Aorta (tissue), 5 donors: ENCODE measurements at regions of chr15 and their contacts with region 1.

Region 1: DNA sequence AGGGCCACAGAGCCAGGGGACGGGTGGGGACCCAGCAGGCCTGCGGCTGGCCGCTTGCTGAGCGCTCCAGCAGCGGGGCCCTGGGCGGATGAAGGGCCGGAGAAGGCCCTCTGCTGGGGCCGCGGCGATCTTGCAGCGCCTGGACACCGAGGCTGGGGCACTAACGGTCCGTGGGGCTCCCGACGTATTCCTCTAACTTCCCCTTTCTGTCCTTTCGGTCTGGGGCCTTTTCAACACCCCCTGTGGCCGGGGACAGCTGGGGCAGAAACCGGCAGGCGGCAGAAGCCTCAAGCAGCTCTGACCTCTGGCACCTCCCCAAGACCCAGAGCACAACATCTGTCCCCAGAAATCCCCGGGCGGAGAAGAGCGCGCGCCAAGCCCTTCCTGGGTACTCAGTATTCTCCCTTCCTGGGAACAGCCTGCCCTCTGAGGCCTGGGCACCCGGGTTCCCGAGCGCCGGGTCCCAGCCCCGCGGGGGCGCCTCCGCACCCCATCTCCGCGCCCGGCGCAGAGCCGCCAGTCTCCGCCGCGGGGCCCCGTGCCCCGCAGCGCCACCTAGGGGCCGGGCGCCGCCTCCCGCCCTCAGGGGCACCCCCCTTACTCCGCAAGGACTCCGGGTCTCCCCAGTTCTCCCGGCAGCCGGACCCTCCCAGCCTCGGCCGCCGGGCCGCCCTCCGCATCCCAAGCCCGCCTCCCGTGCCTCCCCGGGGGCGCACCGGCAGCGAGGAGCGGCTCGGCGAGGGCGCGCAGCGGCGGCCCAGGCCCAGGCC is 582 bp upstream of the SLCO3A1 start:
- DNase-seq: peak; percentile 90
- ATAC-seq: peak; percentile 90
- H3K4me3 ChIP-seq: peak overlapping the region; percentile 93 to 96
- H3K27ac ChIP-seq: peak overlapping the region; percentile 73 to 97
- H3K4me1 ChIP-seq: no peaks in the 10 kb centered on the region
- H3K27me3 ChIP-seq: no peaks in the 10 kb centered on the region

Region 2: DNA sequence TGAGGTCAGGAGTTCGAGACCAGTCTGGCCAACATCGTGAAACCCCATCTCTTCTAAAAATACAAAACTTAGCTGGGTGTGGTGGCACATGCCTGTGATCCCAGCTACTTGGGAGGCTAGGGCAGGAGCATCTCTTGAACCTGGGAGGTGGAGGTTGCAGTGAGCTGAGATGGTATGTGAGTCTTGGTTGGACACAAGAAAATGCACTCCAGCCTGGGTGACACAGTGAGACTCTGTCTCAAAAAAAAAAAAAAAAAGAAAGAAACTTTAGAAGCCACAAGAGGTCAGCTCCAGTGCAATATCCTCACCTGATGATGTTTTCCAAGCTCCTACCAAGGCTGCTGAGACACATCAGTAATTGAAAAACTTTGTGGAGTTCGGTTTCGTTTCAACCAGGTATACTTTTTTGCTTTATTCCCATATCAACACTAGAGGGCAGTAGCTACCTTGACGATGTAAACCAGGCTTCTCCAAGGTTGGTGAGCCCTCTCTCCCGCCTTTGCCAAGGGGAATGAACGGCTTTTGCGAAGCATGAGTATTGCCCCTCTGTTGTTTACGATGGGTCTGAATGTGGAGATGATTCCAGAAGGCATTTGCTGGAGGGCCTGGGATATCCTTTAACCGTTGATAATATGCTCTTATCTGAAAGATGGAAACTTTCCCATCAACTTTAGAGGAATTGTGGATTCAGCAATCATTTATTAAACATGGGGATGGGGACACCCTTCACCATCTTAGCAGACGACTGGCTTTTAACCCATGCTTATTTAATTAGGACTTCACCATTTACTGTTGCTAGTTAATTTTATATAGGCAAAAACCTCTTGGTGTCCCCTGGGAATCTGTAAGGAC is 550.1 kb before region 1 on chr15:
- intact Hi-C with region 1: loop called in 1 of 2 experiments (anchors 10 kb)
- DNase-seq: no peak
- ATAC-seq: peak; percentile 78
- H3K4me3 ChIP-seq: no peak overlapping the region
- H3K27ac ChIP-seq: no peak overlapping the region
- H3K4me1 ChIP-seq: no peaks in the 10 kb centered on the region
- H3K27me3 ChIP-seq: no peaks in the 10 kb centered on the region

Region 3: GRCh38 chr15:91706322-91707032 is 146.4 kb before region 1 on chr15:
- intact Hi-C with region 1: loop called in 1 of 2 experiments (anchors 10 kb)
- DNase-seq: peak; percentile 84 to 87
- ATAC-seq: peak; percentile 86
- H3K4me3 ChIP-seq: no peak overlapping the region
- H3K27ac ChIP-seq: no peak overlapping the region
- H3K4me1 ChIP-seq: no peaks in the 10 kb centered on the region
- H3K27me3 ChIP-seq: no peaks in the 10 kb centered on the region

Region 4: GRCh38 chr15:91965501-91966184 is 112.7 kb after region 1 on chr15:
- intact Hi-C with region 1: loop called in 1 of 2 experiments (anchors 5 kb)
- DNase-seq: peak; percentile 78 to 86
- ATAC-seq: peak; percentile 63
- H3K4me3 ChIP-seq: no peak overlapping the region
- H3K27ac ChIP-seq: peak overlapping the region; percentile 38 to 85
- H3K4me1 ChIP-seq: peaks cover 0 to 7% of the 10 kb centered on the region in 2 donors
- H3K27me3 ChIP-seq: no peaks in the 10 kb centered on the region

Region 5: DNA sequence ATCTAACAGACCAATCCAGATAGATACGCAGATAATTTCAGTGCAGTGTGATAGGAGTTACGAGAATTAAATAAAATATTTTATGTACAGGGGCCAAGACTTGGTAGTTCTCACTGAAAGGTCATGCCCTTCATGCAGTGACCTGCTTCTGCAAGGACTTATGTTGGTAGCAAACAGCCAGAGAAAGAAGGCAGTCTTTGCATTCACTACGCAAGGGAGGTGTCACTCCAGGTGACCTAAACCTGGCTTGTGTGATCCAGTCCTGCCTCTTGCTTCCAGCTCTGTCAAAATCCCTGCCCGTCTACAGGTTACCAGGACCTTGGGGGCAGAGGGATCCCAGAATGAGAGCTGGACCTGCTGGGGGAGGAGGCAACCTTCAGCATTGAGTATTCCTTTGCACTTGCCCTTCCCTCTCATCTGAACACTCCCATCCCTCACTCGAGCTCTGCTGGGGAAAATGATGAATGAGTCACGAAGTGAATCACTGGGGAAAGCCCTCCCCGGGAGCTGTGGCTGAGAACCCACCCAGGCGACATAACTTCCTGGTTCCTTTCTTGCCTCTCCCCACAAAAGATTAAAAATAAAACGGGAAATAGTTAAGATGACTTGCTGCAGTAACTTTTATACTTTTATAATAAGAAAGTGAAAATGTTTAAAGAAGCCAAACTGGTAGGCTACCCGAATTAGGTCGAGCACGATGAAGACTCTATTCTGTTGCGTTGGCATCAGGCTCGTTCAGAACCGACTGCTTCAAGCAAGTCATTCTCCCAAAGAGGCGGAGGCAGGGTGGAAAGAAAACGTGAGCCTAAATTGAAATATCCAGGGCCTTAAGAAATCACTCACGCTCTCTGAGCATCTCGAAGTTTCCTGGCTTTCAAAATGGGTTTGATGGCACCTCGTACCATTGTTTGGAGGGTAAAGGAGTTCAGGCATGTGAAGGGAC is 216.7 kb after region 1 on chr15:
- intact Hi-C with region 1: loop called in 1 of 2 experiments (anchors 5 kb)
- DNase-seq: peak in 1 of 2 donors; percentile 84
- ATAC-seq: peak; percentile 78
- H3K4me3 ChIP-seq: peak overlapping the region; percentile 15 to 27
- H3K27ac ChIP-seq: peak overlapping the region in 1 of 2 donors; percentile 61
- H3K4me1 ChIP-seq: peaks cover 0 to 2% of the 10 kb centered on the region in 2 donors
- H3K27me3 ChIP-seq: no peaks in the 10 kb centered on the region